AG04450 (cell line): ENCODE measurements at regions of chr17 and their contacts with region 1.

Region 1: DNA sequence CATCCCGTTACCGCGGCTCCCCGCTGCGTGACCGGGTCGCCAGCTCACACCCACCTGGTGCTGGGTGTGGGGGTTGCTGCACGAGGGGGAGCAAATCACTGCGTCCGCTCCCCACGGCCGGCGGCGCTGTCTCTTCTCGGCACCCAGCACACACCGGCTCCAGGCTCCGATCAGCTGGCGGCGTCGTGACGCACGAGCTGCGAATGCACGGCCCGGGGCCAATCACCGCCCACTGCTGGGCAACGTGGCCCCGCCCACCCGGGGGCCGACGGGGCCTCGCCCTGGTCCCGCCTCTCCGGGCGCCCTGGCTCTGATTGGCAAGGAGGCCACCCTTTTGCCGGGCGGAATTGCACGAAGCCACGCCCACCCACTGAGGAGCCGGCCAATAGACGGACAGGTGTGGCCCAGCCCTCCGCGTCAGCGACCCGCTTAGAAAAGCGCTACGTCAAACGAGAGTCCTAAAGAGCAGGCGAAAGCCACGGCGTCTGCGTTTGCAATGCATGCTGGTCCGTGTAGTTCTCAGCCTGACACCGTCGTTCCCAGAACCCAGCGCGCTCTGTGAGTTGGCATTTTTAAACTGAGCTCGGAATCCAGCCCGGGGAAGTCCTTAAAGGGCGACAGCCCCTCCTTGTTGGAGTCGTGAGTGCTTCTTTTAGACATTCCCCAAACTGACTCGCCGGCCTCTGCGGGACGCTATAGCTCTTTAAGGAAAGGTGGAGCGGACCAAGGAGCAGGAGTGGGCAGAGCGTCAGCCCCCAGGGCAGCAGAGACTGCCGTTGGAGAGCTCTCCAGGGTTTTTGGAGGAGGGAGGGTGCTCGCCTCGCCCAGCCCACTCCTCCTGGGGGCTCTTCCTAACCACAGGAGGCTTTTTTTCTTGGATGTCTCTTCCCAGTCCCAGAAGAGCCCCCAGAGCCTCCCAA is 6.2 kb upstream of the TLCD2 start:
- DNase-seq: peak; percentile 100
- H3K4me3 ChIP-seq: peak overlapping the region; percentile 92
- H3K27ac ChIP-seq: peak overlapping the region; percentile 100
- H3K27me3 ChIP-seq: no peaks in the 10 kb centered on the region
- CTCF ChIP-seq: peak; percentile 19; the same call in 1 of the 2 replicates

Region 2: DNA sequence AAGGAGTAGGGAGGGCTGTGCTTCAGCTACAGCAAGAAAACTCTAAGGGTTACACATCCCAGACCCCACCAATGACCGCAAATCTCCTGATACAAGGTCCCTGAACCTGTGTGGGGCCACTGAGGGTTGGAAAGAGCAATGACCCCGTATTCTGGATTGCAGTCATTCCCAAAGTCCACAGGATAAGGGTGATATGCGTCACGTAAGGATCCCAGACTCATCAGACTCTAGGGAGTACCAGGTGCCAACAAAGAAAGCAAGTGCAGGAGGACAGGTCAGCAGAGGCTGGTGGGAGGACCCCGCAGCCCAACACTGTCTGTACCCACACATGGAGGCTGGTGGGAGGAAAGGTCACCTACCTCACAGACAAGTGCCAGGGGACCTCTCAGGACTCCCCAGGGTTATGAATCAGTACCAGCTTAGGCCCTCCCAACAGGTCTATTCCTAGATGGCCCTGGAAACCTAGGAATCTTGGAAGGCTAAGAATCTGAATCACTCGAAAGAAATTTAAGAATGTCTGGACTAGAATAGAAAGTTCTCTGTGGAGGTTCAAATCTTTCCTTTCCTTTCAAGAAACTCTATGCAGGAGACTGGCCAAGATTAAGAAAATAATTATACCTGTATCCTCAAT is 169.9 kb before region 1 on chr17:
- CTCF ChIA-PET with region 1: no interaction called
- POLR2A ChIA-PET with region 1: no interaction called
- DNase-seq: no peak
- H3K4me3 ChIP-seq: no peak overlapping the region
- H3K27ac ChIP-seq: no peak overlapping the region
- H3K27me3 ChIP-seq: no peaks in the 10 kb centered on the region
- CTCF ChIP-seq: no peak

Region 3: GRCh38 chr17:1648963-1649843 is 67.1 kb before region 1 on chr17:
- CTCF ChIA-PET with region 1: interaction called, 6 read pairs
- POLR2A ChIA-PET with region 1: interaction called, 48 read pairs
- DNase-seq: peak; percentile 93
- H3K4me3 ChIP-seq: peak overlapping the region; percentile 63
- H3K27ac ChIP-seq: peak overlapping the region; percentile 57
- H3K27me3 ChIP-seq: no peaks in the 10 kb centered on the region
- CTCF ChIP-seq: peak; percentile 78; the same call in 1 of the 2 replicates

Region 4: DNA sequence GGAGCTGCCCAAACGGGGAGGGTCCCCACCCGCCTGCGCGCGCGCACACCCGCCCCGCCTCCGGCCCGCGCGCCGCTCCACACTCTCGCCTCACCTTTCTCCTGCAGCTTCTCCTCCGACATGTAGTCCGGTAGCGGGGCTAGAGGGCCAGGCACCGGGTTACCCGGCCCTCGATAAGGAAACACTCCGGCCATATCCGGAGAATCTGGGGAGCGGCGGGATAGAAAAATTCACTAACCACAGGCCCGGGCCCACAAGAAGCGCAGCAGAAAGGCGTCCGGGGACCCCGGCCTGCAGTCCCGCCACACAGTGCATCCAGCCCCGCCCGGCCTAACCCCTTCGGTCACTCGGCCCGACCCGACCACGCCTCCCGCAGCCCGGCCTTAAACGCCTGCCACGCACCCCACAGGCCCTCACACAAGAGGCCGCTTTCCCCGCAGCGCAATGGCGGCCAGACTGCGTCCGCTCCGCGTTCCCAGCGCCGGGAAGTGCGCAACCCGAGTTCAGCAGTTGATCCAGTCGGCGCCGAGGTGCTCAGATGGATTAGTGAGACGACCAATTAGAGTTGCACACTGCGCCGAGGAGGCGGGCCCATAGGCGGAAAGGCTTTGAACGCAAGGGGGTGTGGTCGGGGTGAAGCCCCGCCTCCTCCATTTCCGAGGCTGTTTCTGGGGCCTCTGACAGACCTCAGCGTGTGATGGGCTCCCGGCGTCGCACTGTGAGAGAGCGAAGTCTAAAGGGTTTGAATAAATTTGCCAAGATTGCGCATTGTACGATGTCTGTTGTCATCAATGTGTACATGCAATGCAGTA is 31.8 kb before region 1 on chr17 and contains the start of gene PRPF8:
- CTCF ChIA-PET with region 1: no interaction called
- POLR2A ChIA-PET with region 1: interaction called, 25 read pairs
- DNase-seq: peak; percentile 91
- H3K4me3 ChIP-seq: peak within 1 kb of the TSS; percentile 83
- H3K27ac ChIP-seq: peak within 1 kb of the TSS; percentile 86
- H3K27me3 ChIP-seq: no peaks in the 10 kb centered on the region
- CTCF ChIP-seq: no peak
- polyA plus RNA-seq, gene PRPF8: 126 and 161 TPM in 2 replicates

Region 5: GRCh38 chr17:1764284-1764683 is 47.9 kb after region 1 on chr17:
- CTCF ChIA-PET with region 1: interaction called, 3 read pairs
- POLR2A ChIA-PET with region 1: interaction called, 25 read pairs
- DNase-seq: peak; percentile 75
- H3K4me3 ChIP-seq: peak overlapping the region; percentile 75
- H3K27ac ChIP-seq: peak overlapping the region; percentile 86
- H3K27me3 ChIP-seq: no peaks in the 10 kb centered on the region
- CTCF ChIP-seq: no peak

Region 6: GRCh38 chr17:1820528-1821252 is 104.4 kb after region 1 on chr17:
- CTCF ChIA-PET with region 1: no interaction called
- POLR2A ChIA-PET with region 1: interaction called, 11 read pairs
- DNase-seq: no peak
- H3K4me3 ChIP-seq: no peak overlapping the region
- H3K27ac ChIP-seq: no peak overlapping the region
- H3K27me3 ChIP-seq: no peaks in the 10 kb centered on the region
- CTCF ChIP-seq: no peak